CD4-positive, alpha-beta T cell (primary cell): ENCODE measurements at regions of chr2 and their contacts with region 1.

Region 1: GRCh38 chr2:148540022-148540421 is 104.5 kb upstream of the EPC2 start:
- DNase-seq: peak in 5 of 14 experiments; percentile 26 to 56 (median 41)
- ATAC-seq: peak; percentile 78
- H3K4me3 ChIP-seq: no peak overlapping the region
- H3K4me3 Mint-ChIP-seq: peak overlapping the region; percentile 21
- H3K27ac ChIP-seq: no peak overlapping the region
- H3K27ac Mint-ChIP-seq: peak overlapping the region; percentile 31
- H3K4me1 ChIP-seq: peaks cover 40% of the 10 kb centered on the region
- H3K4me1 Mint-ChIP-seq: peaks cover 48% of the 10 kb centered on the region
- H3K27me3 ChIP-seq: no peaks in the 10 kb centered on the region
- H3K27me3 Mint-ChIP-seq: no peaks in the 10 kb centered on the region
- CTCF ChIP-seq: no peak

Region 2: DNA sequence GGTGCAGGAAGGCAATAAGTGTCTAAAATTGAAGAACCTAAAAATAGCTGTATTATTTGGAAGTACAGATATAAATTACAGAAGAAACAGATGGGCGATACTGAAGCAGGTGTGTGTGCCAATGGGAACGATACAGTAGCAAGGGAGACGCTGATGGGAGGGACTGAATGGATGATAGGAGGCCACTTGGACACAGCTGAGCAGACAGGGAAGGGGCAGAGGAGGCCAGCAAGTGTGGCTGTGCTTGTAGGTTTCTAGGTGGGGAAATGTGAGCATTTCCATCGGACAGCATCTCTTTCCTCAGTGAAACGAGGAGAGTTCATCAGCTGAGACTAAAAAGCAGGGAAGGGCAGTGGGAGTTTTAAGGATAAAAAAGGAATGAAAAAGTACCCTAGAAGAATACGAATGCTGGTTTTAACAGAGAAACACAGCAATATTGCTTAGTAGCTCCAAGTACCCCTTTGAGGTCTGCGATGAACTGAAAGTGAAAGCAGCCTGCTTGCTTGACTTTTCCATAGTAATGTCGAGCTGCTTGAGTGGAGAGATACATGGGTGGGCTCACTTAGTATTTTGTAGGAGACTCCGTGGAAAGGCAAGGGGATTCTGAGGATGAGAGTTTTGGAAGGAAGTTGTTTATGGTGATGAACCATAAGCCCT is 12.8 kb after region 1 on chr2:
- CTCF ChIA-PET with region 1: interaction called, 6 read pairs
- POLR2A ChIA-PET with region 1: interaction called, 18 read pairs
- intact Hi-C with region 1: no loop called
- DNase-seq: peak in 5 of 14 experiments; percentile 18 to 70 (median 67)
- ATAC-seq: peak; percentile 81
- H3K4me3 ChIP-seq: peak overlapping the region; percentile 57
- H3K4me3 Mint-ChIP-seq: no peak overlapping the region
- H3K27ac ChIP-seq: peak overlapping the region; percentile 46 to 65
- H3K27ac Mint-ChIP-seq: no peak overlapping the region
- H3K4me1 ChIP-seq: peaks cover 14% of the 10 kb centered on the region
- H3K4me1 Mint-ChIP-seq: no peaks in the 10 kb centered on the region
- H3K27me3 ChIP-seq: no peaks in the 10 kb centered on the region
- H3K27me3 Mint-ChIP-seq: no peaks in the 10 kb centered on the region
- CTCF ChIP-seq: no peak